Endothelial cell of umbilical vein (primary cell): ENCODE measurements at regions of chr9 and their contacts with region 1.

Region 1: GRCh38 chr9:120730661-120731514 is 16.6 kb upstream of the MEGF9 start:
- DNase-seq: peak; percentile 92
- H3K4me3 ChIP-seq: no peak overlapping the region
- H3K27ac ChIP-seq: no peak overlapping the region
- H3K4me1 ChIP-seq: peaks cover 15% of the 10 kb centered on the region
- H3K27me3 ChIP-seq: no peaks in the 10 kb centered on the region
- CTCF ChIP-seq: no peak
- POLR2A ChIP-seq: peak; percentile 38

Region 2: GRCh38 chr9:119781886-119782285 is 949.0 kb before region 1 on chr9:
- CTCF ChIA-PET with region 1: no interaction called
- POLR2A ChIA-PET with region 1: no interaction called
- dilution Hi-C with region 1: no loop called
- intact Hi-C with region 1: no loop called
- DNase-seq: no peak
- H3K4me3 ChIP-seq: no peak overlapping the region
- H3K27ac ChIP-seq: no peak overlapping the region
- H3K4me1 ChIP-seq: no peaks in the 10 kb centered on the region
- H3K27me3 ChIP-seq: no peaks in the 10 kb centered on the region
- CTCF ChIP-seq: no peak
- POLR2A ChIP-seq: no peak

Region 3: DNA sequence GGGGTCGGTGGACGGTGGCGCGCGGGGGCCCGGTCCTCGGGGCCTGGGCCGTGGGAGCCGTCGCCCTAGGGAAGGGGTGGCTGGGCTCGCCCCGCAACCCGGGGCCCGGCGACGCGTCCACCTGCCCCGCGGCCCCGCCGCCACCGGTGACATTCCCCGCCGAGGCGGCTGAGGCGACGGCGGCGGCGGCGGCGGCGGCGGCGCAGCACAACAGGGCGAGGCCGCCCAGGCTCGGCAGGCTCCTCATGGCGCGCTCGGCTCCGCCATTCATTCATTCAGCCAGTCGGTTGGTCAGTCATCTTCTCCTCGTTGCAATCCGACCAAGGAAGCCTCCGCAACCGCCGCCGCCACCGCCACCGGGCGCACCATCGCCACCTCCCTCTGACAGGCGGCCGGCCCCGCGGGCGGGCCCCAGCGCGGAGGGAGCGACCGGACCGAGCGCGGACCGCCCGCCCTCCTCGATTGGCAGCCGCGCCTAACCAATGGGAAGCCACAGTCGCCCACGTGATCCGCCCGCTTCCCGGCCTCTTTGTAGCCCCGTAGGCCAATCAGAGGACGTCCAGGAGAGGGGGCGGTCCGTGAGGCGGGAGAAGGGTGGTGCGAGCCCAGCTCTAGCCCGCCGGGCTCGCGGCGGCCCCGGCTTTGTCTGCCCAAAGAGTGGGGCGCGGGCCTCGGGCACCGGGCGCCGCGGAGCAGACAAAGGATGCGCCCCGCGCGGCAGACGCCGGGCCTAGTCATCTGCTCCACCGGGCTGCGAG is 16.6 kb before region 1 on chr9 and contains the start of gene MEGF9:
- CTCF ChIA-PET with region 1: interaction called, 9 read pairs
- POLR2A ChIA-PET with region 1: interaction called, 4 read pairs
- dilution Hi-C with region 1: no loop called
- intact Hi-C with region 1: loop called (anchors 1 kb)
- DNase-seq: peak; percentile 98
- H3K4me3 ChIP-seq: peak within 1 kb of the TSS; percentile 65 to 84 (median 67)
- H3K27ac ChIP-seq: peak within 1 kb of the TSS; percentile 68
- H3K4me1 ChIP-seq: peaks cover 21% of the 10 kb centered on the region
- H3K27me3 ChIP-seq: no peaks in the 10 kb centered on the region
- CTCF ChIP-seq: no peak
- POLR2A ChIP-seq: peak; percentile 81
- total RNA-seq, gene MEGF9: 11.1 and 13.0 TPM in 2 replicates

Region 4: GRCh38 chr9:120815075-120815474 is 84.2 kb after region 1 on chr9:
- CTCF ChIA-PET with region 1: no interaction called
- POLR2A ChIA-PET with region 1: no interaction called
- dilution Hi-C with region 1: no loop called
- intact Hi-C with region 1: no loop called
- DNase-seq: no peak
- H3K4me3 ChIP-seq: no peak overlapping the region
- H3K27ac ChIP-seq: no peak overlapping the region
- H3K4me1 ChIP-seq: no peaks in the 10 kb centered on the region
- H3K27me3 ChIP-seq: no peaks in the 10 kb centered on the region
- CTCF ChIP-seq: no peak
- POLR2A ChIP-seq: no peak

Region 5: GRCh38 chr9:120892748-120893610 is 162.1 kb after region 1 on chr9:
- CTCF ChIA-PET with region 1: no interaction called
- POLR2A ChIA-PET with region 1: no interaction called
- dilution Hi-C with region 1: no loop called
- intact Hi-C with region 1: no loop called
- DNase-seq: peak; percentile 96
- H3K4me3 ChIP-seq: no peak overlapping the region
- H3K27ac ChIP-seq: peak overlapping the region; percentile 54
- H3K4me1 ChIP-seq: peaks cover 25% of the 10 kb centered on the region
- H3K27me3 ChIP-seq: no peaks in the 10 kb centered on the region
- CTCF ChIP-seq: no peak
- POLR2A ChIP-seq: no peak